ENCODE measurements at regions of chr13 and their contacts with region 1.

Region 1: GRCh38 chr13:49840266-49840665 is 47.8 kb upstream of the KPNA3 start:
- DNase-seq: no peak
- ATAC-seq: no peak

Region 2: DNA sequence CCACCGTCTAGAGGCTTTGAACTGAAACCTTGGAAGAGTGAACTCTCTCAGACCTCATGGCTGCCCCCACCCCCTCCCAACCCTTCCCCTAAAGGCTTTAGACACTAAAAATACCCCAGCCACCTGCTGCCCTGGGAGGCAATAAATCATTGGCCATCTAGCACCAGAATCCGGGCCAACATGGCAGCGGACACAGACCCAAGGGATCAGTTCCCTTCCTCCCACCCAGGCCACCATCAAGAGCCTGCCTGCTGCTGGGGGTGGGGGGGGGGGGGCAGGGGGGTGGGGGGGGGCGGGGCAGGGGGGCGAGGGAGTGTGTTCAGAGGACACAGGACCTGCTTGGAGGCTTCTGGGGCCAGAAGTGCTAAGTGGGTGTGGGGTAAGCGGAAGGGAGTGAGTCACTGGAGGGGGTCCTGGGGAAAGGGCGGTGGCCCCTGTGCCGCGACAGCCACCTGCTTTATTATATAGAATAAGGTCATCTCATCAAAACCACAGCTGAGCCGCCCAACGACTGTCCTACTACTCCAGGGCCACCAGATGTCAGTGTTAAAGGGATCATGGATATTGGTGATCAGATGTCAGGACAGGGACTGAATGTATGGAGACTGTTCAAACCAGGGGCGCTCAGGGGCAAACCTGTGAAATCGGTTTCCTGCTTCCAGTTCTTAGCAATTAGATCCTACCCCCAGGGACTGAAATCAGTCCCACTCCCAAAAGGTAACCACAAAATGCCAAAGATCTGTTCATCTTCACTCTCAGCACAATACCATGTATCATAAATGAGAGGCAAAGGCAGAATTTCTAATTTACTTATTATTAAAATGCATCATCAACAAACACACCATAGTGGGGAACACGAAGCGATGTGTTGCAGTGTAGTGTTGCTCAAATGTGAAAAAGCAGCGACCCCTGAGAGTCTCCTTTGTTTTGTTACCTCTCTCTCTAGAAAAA is 187.6 kb before region 1 on chr13:
- intact Hi-C with region 1: loop called (anchors 5 kb)
- DNase-seq: no peak
- ATAC-seq: peak; percentile 64

Region 3: DNA sequence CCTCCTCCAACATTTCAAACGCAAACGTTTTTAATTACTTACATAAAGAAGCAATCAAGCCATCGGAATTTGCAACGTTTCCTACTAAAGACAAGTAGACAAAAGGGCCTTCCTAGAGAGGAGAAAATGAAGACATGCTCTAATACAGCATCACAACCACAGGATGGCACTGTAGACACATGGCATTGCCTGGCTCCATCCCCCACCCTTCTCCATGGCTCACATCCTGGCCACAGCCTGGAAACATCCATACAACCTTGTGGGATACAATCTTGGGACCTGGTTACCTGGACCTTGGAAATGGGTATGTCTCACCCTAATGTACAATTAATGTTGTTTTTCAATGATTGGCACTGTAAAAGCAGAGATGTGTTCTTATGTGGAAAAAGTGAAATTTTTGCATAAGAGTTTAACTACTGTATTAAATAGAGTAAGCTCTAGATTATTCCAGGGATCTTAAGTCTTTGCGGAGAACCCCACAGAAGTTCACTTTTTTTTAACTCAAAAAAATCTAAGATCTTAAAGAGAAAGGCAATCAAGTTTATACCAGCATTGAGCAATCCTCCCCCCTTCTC is 170.4 kb before region 1 on chr13:
- intact Hi-C with region 1: loop called (anchors 5 kb)
- DNase-seq: no peak
- ATAC-seq: peak; percentile 85

Region 4: GRCh38 chr13:49746111-49746510 is 94.2 kb before region 1 on chr13:
- intact Hi-C with region 1: no loop called
- DNase-seq: no peak
- ATAC-seq: peak; percentile 65